Left lung (tissue), 14 donors: ENCODE measurements at regions of chr3 and their contacts with region 1.

Region 1: DNA sequence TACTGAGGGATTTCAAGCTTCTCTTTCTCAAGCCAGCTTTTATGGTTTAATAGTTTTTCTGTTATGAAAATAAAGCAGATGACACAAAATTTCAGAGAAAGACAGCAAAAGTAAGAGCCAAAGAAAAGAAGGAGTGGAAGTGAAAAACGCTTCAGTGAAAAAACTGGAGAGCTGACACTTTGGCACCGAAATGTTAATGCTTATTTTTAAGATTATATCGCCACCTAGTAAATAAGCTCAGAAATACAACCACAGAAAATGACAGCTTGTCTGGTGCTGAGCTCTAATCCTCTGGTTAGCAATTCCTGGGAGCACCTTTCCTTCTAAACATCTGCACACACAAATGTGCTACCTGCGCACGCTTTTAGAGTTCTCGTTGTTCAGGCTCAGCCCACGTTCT is 101.6 kb downstream of the ZPLD1 start:
- DNase-seq: peak in 1 of 4 donors; percentile 51
- ATAC-seq: peak; percentile 71
- H3K4me3 ChIP-seq: no peak overlapping the region
- H3K27ac ChIP-seq: no peak overlapping the region
- H3K4me1 ChIP-seq: no peaks in the 10 kb centered on the region
- H3K27me3 ChIP-seq: no peaks in the 10 kb centered on the region
- CTCF ChIP-seq: peak; percentile 18 to 21

Region 2: GRCh38 chr3:101809178-101810021 is 727.1 kb before region 1 on chr3:
- intact Hi-C with region 1: loop called in 1 of 2 experiments (anchors 5 kb)
- DNase-seq: peak in 1 of 4 donors; percentile 42
- ATAC-seq: peak; percentile 80
- H3K4me3 ChIP-seq: no peak overlapping the region
- H3K27ac ChIP-seq: peak overlapping the region in 1 of 2 donors; percentile 38
- H3K4me1 ChIP-seq: peaks cover 6 to 25% of the 10 kb centered on the region in 2 donors
- H3K27me3 ChIP-seq: no peaks in the 10 kb centered on the region
- CTCF ChIP-seq: peak; percentile 45 to 69

Region 3: GRCh38 chr3:102229062-102229655 is 307.3 kb before region 1 on chr3:
- intact Hi-C with region 1: loop called in 1 of 2 experiments (anchors 5 kb)
- DNase-seq: peak in 3 of 4 donors; percentile 47 to 77 (median 70)
- ATAC-seq: peak; percentile 90
- H3K4me3 ChIP-seq: no peak overlapping the region
- H3K27ac ChIP-seq: no peak overlapping the region
- H3K4me1 ChIP-seq: peaks cover 0 to 11% of the 10 kb centered on the region in 2 donors
- H3K27me3 ChIP-seq: no peaks in the 10 kb centered on the region
- CTCF ChIP-seq: peak; percentile 86 to 91

Region 4: GRCh38 chr3:102394517-102394916 is 141.9 kb before region 1 on chr3:
- intact Hi-C with region 1: no loop called
- DNase-seq: no peak
- ATAC-seq: no peak
- H3K4me3 ChIP-seq: no peak overlapping the region
- H3K27ac ChIP-seq: no peak overlapping the region
- H3K4me1 ChIP-seq: no peaks in the 10 kb centered on the region
- H3K27me3 ChIP-seq: no peaks in the 10 kb centered on the region
- CTCF ChIP-seq: no peak

Region 5: DNA sequence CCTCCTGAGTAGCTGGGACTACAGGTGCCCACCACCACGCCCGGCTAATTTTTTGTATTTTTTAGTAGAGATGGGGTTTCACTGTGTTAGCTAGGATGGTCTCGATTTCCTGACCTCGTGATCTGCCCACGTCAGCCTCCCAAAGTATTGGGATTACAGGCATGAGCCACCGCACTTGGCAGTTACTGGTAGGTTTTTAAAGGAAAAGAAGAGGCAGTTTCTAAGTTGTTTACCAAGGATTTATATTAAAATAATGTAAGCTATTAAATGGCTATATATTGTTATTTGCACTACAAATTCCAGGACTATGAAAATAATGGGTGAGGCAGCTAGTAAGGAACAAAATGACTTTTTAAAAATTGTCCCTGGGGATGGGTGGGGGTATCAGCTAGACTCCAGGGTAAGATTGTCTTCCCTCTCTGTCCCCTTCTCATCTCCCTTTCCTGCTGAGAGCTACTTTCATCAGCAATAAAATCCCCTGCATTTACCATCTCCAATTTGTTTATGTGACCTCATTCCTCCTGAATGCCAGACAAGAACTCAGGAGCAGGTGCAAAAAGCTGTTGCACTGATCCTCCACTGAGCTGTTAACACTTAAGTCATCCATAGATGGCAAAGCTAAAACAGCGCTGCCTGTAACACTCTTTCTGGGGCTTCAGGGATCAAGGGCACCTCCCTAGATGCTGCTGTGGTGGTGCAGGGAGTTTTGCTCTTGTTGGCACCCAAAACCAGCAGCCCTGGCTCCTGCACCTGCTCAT is 63.5 kb after region 1 on chr3:
- intact Hi-C with region 1: no loop called
- DNase-seq: no peak
- ATAC-seq: no peak
- H3K4me3 ChIP-seq: no peak overlapping the region
- H3K27ac ChIP-seq: no peak overlapping the region
- H3K4me1 ChIP-seq: no peaks in the 10 kb centered on the region
- H3K27me3 ChIP-seq: no peaks in the 10 kb centered on the region
- CTCF ChIP-seq: no peak